Ascending aorta (tissue), 2 donors: ENCODE measurements at regions of chr12 and their contacts with region 1.

Region 1: DNA sequence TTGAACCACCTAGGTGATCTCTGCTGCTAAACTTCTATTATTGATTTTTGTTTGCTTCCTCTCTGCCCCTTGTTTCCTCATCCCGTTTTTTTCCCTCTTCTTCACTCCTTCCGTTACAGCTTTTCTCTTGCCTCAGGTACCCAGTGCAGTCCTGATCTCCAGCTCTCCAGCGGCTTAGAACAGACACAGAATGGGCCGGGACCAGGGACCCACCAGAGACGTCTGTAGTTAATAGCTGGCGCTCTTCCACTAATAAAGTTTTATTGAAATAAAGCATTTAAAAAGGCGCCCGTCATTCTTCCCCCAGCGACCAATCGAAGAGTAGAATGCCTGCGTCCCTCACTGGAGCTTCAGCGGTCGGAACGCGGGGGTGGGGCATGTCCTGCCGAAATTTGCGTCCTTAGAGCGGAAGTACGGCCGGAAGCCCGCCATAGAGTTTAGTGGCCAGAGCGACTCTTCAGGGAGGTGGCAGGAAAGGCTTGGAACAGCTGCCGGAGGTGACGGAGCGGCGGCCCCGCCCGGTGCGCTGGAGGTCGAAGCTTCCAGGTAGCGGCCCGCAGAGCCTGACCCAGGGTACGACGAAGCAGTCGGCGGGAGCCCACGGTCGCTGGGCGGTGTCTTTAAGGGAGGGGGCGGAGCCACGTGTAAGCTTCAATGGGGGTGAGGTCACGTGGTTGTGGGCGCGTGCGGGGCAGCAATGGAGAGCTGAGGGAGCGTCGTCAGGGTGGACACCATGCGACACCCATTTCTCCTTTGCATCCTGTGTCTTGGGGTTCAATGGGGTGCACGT is at the start of gene COPS7A:
- DNase-seq: peak; percentile 91 to 99
- H3K4me3 ChIP-seq: peak within 1 kb of the TSS; percentile 62 to 70
- H3K27ac ChIP-seq: peak within 1 kb of the TSS; percentile 75 to 93
- H3K4me1 ChIP-seq: peaks cover 0 to 8% of the 10 kb centered on the region in 2 donors
- H3K27me3 ChIP-seq: no peaks in the 10 kb centered on the region
- CTCF ChIP-seq: no peak
- total RNA-seq, gene COPS7A: 221 TPM

Region 2: GRCh38 chr12:6700646-6701051 is 23.2 kb before region 1 on chr12 and contains the start of gene PIANP:
- intact Hi-C with region 1: loop called (anchors 1 kb)
- DNase-seq: peak in 1 of 2 donors; percentile 75
- H3K4me3 ChIP-seq: peak within 1 kb of the TSS; percentile 72 to 89
- H3K27ac ChIP-seq: peak within 1 kb of the TSS; percentile 46 to 62
- H3K4me1 ChIP-seq: peaks cover 0 to 8% of the 10 kb centered on the region in 2 donors
- H3K27me3 ChIP-seq: no peaks in the 10 kb centered on the region
- CTCF ChIP-seq: no peak
- total RNA-seq, gene PIANP: not detected

Region 3: GRCh38 chr12:6873094-6874014 is 149.6 kb after region 1 on chr12 and contains the start of gene SPSB2:
- intact Hi-C with region 1: no loop called
- DNase-seq: peak; percentile 85 to 99
- H3K4me3 ChIP-seq: peak within 1 kb of the TSS; percentile 82 to 90
- H3K27ac ChIP-seq: peak within 1 kb of the TSS; percentile 85 to 92
- H3K4me1 ChIP-seq: peaks cover 13 to 28% of the 10 kb centered on the region in 2 donors
- H3K27me3 ChIP-seq: no peaks in the 10 kb centered on the region
- CTCF ChIP-seq: no peak
- total RNA-seq, gene SPSB2: 14.5 TPM

Region 4: GRCh38 chr12:7060353-7060954 is 336.7 kb after region 1 on chr12 and contains the start of gene C1S:
- intact Hi-C with region 1: no loop called
- DNase-seq: peak; percentile 57 to 93
- H3K4me3 ChIP-seq: peak within 1 kb of the TSS; percentile 34 to 55
- H3K27ac ChIP-seq: peak within 1 kb of the TSS; percentile 80 to 82
- H3K4me1 ChIP-seq: peaks cover 0 to 17% of the 10 kb centered on the region in 2 donors
- H3K27me3 ChIP-seq: no peaks in the 10 kb centered on the region
- CTCF ChIP-seq: peak; percentile 81 to 92 (median 88)
- total RNA-seq, gene C1S: 273 TPM